ENCODE measurements at regions of chr2 and their contacts with region 1.

Region 1: GRCh38 chr2:63740943-63741342 is 100.8 kb upstream of the UGP2 start:
- DNase-seq: no peak
- ATAC-seq: no peak
- H3K4me3 Mint-ChIP-seq: no peak overlapping the region
- H3K27ac Mint-ChIP-seq: no peak overlapping the region
- H3K4me1 Mint-ChIP-seq: peaks cover 7% of the 10 kb centered on the region
- H3K27me3 Mint-ChIP-seq: no peaks in the 10 kb centered on the region

Region 2: DNA sequence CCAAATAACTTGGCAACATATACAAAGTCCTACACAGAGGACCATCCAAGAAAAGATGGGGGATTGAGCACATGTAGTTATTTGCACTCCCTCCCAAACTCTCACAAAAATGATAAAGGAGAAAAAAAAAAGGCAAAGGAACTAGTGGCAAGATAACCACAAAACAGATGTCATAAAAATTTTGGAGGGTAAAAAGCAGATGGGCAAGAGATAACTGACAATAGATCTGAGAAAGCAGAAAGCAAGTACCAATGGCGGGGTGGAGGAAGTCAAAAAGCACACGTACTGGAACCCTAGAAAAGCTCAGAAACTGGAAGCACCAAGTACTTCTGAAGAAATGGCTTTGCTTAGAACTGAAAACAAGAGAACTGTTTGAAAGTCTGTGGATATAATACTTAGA is 234.6 kb before region 1 on chr2:
- CTCF ChIA-PET with region 1: no interaction called
- POLR2A ChIA-PET with region 1: no interaction called
- intact Hi-C with region 1: no loop called
- DNase-seq: no peak
- ATAC-seq: no peak
- H3K4me3 Mint-ChIP-seq: no peak overlapping the region
- H3K27ac Mint-ChIP-seq: no peak overlapping the region
- H3K4me1 Mint-ChIP-seq: peaks cover 10% of the 10 kb centered on the region
- H3K27me3 Mint-ChIP-seq: no peaks in the 10 kb centered on the region

Region 3: DNA sequence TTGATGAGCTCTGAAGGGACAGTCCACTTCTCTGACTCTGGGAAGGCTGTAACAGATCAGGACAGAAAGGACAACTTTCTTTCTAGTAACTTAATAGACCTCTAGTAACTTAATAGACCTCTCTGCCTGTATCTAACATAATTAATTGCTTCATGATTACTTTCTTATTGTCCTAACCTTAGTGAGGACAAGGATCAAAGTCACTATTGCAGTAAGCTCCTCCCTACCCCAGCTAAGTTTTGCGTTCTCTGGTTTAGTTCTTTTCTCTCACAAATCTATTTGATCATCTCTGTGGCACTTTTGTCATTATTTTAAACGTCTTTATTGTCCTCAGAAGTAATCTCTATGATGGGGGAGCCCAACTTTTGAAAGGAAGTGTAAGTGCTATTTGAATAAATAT is 24.8 kb before region 1 on chr2:
- CTCF ChIA-PET with region 1: no interaction called
- POLR2A ChIA-PET with region 1: interaction called, 13 read pairs
- intact Hi-C with region 1: no loop called
- DNase-seq: no peak
- ATAC-seq: no peak
- H3K4me3 Mint-ChIP-seq: no peak overlapping the region
- H3K27ac Mint-ChIP-seq: no peak overlapping the region
- H3K4me1 Mint-ChIP-seq: no peaks in the 10 kb centered on the region
- H3K27me3 Mint-ChIP-seq: no peaks in the 10 kb centered on the region

Region 4: DNA sequence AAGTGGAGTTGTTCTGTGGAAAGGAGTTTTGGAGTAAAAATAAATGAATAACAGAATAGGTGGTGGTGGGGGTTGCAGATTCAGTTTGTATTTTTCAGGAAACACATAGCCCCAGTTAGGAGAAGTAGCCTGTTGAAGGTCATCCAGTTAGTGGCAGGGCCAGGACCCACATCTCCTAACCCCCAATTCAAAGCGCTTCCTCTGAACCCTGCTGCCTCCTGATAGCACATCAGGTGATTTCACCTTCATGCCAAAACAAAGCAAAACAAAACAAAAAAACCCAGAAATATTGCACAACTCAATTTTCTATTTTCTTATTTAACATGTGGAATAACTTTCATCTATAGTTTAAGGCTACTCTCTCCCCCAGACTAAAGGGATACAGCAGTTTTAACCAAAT is 11.6 kb before region 1 on chr2:
- CTCF ChIA-PET with region 1: no interaction called
- POLR2A ChIA-PET with region 1: no interaction called
- intact Hi-C with region 1: no loop called
- DNase-seq: no peak
- ATAC-seq: no peak
- H3K4me3 Mint-ChIP-seq: no peak overlapping the region
- H3K27ac Mint-ChIP-seq: no peak overlapping the region
- H3K4me1 Mint-ChIP-seq: no peaks in the 10 kb centered on the region
- H3K27me3 Mint-ChIP-seq: peaks cover 4% of the 10 kb centered on the region

Measured in activated CD4-positive, alpha-beta T cell treated with anti-CD3 and anti-CD28 coated beads for 36 hours (primary cell).